Heart right ventricle (tissue), 16 donors: ENCODE measurements at regions of chr10 and their contacts with region 1.

Region 1: GRCh38 chr10:15719899-15720634 is at the start of gene ITGA8:
- DNase-seq: peak; percentile 37 to 38
- ATAC-seq: peak; percentile 55 to 77 (median 68)
- H3K4me3 ChIP-seq: peak within 1 kb of the TSS; percentile 31 to 61 (median 53)
- H3K27ac ChIP-seq: peak within 1 kb of the TSS in 4 of 10 donors; percentile 18 to 53 (median 29)
- H3K4me1 ChIP-seq: peaks cover 0 to 20% (median 8%) of the 10 kb centered on the region in 9 donors
- H3K27me3 ChIP-seq: peaks cover 8 to 62% (median 44%) of the 10 kb centered on the region in 7 donors
- CTCF ChIP-seq: peak in 8 of 9 donors; percentile 3 to 58 (median 38)
- total RNA-seq, gene ITGA8: 0.62 to 4.2 (median 2.1) TPM

Region 2: DNA sequence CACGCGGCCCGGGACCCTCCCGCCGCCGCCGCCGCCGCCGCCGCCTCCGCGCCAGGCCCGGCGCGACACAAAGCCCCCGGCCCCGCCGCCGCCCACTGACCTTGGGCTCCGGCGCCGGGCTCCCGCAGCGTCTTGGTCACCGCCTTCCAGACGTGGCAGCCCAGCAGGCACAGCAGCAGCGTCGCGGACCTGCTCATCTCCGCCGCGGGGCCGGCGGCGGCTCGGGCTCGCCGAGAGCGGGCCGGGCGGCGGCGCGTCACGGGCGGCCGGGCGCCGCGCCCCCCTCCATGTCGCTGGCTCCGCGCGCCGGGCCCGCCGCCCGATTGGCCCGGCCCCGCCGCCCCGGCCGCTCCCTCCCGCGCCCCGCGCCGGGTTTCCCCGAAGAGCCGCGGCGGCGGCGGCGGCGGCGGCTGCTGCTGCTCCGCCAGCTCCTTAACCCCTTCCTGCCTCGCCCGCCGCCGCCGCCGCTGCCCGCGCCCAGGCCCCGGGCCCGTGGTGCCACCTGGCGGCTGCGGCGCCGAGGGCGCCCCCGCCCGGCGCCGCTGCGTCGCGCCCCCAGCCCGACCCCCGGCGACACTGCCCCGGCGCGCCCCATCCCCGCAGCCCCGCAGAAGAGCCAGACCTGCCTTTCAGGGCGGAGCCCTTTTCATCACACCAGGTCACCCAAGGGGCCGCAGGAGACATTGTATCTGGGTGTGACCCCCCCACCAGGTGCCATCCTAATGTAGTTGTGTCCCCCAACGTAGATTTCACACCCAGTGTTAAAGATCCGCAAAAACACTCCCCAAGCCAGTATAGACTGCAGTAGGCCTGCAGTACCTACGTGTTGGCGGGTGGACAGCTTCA is 349.0 kb before region 1 on chr10 and contains the start of gene FAM171A1:
- intact Hi-C with region 1: no loop called
- DNase-seq: peak; percentile 42 to 68
- ATAC-seq: peak; percentile 35 to 86 (median 71)
- H3K4me3 ChIP-seq: peak within 1 kb of the TSS; percentile 60 to 82 (median 72)
- H3K27ac ChIP-seq: peak within 1 kb of the TSS in 8 of 10 donors; percentile 59 to 81 (median 76)
- H3K4me1 ChIP-seq: peaks cover 0 to 42% (median 15%) of the 10 kb centered on the region in 9 donors
- H3K27me3 ChIP-seq: peaks cover 0 to 69% (median 0%) of the 10 kb centered on the region in 7 donors
- CTCF ChIP-seq: peak in 6 of 9 donors; percentile 3 to 48 (median 14)
- total RNA-seq, gene FAM171A1: 3.5 to 10.5 (median 6.8) TPM

Region 3: GRCh38 chr10:15427843-15428414 is 292.1 kb before region 1 on chr10:
- intact Hi-C with region 1: loop called in 8 of 10 experiments (anchors 2 to 5 kb)
- DNase-seq: no peak
- ATAC-seq: peak in 1 of 8 donors; percentile 39
- H3K4me3 ChIP-seq: no peak overlapping the region
- H3K27ac ChIP-seq: no peak overlapping the region
- H3K4me1 ChIP-seq: no peaks in the 10 kb centered on the region
- H3K27me3 ChIP-seq: peaks cover 0 to 5% (median 0%) of the 10 kb centered on the region in 7 donors
- CTCF ChIP-seq: peak in 8 of 9 donors; percentile 39 to 72 (median 58)

Region 4: DNA sequence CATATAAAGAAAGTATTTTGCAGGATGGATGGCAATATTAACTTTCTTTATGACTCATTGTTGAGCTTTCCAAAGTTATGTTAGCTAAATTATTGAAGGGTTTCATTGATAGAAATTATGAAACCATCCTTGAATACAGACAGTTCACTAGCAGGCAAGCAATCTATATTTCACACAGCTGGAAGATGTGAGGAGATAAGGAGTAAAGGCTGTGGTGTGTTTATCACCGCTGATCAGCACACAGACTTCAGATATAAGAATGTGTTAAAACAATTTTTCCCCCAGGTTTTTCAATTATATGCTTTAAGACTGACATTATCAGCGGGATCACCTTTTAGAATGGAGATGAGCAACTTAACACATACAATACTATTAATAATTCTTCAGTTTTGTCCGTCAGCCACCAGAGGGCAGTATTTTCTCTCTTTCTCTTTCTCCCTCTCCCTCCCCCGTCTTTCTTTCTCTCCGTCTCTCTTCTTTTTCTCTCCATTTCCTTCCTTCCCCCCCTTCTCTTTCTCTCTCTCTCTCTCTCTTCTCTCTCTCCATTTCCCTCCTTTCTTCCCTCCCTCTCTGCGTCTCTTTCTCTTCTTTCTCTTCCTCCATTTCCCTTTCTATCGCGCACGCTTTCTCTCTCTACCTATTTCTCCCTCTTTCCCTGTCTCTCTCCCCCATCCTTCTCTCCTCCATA is 286.1 kb before region 1 on chr10:
- intact Hi-C with region 1: loop called (anchors 2 to 5 kb)
- DNase-seq: peak in 1 of 2 donors; percentile 57
- ATAC-seq: peak in 7 of 8 donors; percentile 38 to 87 (median 70)
- H3K4me3 ChIP-seq: peak overlapping the region in 7 of 10 donors; percentile 24 to 49 (median 41)
- H3K27ac ChIP-seq: no peak overlapping the region
- H3K4me1 ChIP-seq: peaks cover 0 to 7% (median 2%) of the 10 kb centered on the region in 9 donors
- H3K27me3 ChIP-seq: peaks cover 0 to 5% (median 0%) of the 10 kb centered on the region in 7 donors
- CTCF ChIP-seq: peak; percentile 69 to 86 (median 79)

Region 5: GRCh38 chr10:15439341-15439842 is 280.7 kb before region 1 on chr10:
- intact Hi-C with region 1: loop called in 8 of 10 experiments (anchors 2 to 5 kb)
- DNase-seq: peak; percentile 52 to 81
- ATAC-seq: peak; percentile 80 to 96 (median 93)
- H3K4me3 ChIP-seq: peak overlapping the region in 9 of 10 donors; percentile 1 to 49 (median 35)
- H3K27ac ChIP-seq: peak overlapping the region; percentile 47 to 83 (median 62)
- H3K4me1 ChIP-seq: peaks cover 0 to 20% (median 13%) of the 10 kb centered on the region in 9 donors
- H3K27me3 ChIP-seq: no peaks in the 10 kb centered on the region
- CTCF ChIP-seq: peak in 6 of 9 donors; percentile 19 to 53 (median 43)

Region 6: GRCh38 chr10:15642095-15642494 is 78.0 kb before region 1 on chr10:
- intact Hi-C with region 1: no loop called
- DNase-seq: no peak
- ATAC-seq: peak in 4 of 8 donors; percentile 48 to 79 (median 62)
- H3K4me3 ChIP-seq: no peak overlapping the region
- H3K27ac ChIP-seq: no peak overlapping the region
- H3K4me1 ChIP-seq: no peaks in the 10 kb centered on the region
- H3K27me3 ChIP-seq: no peaks in the 10 kb centered on the region
- CTCF ChIP-seq: no peak

Region 7: GRCh38 chr10:15658069-15658702 is 61.9 kb before region 1 on chr10:
- intact Hi-C with region 1: loop called in 1 of 10 experiments (anchors 10 kb)
- DNase-seq: no peak
- ATAC-seq: no peak
- H3K4me3 ChIP-seq: no peak overlapping the region
- H3K27ac ChIP-seq: no peak overlapping the region
- H3K4me1 ChIP-seq: no peaks in the 10 kb centered on the region
- H3K27me3 ChIP-seq: no peaks in the 10 kb centered on the region
- CTCF ChIP-seq: no peak

Region 8: DNA sequence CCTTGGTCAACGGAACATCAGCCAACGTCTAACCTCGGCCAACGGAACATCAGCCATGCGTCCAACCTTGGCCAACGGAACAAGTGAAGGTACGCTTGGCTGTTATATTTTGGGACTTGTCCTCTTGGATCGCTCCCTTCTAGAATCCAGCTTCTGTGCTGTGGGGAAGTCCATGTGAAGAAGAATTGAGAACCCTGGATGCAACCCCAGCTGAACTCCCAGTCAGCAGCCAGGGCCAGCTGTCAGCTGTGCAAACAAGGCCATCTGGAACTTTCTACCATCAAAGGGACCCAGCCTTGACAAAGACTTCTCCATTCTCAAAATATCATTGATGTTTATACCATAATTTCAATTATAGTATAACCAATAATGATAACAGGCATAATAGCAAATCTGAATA is 42.9 kb after region 1 on chr10:
- intact Hi-C with region 1: no loop called
- DNase-seq: peak; percentile 11 to 38
- ATAC-seq: peak in 5 of 8 donors; percentile 60 to 76 (median 67)
- H3K4me3 ChIP-seq: no peak overlapping the region
- H3K27ac ChIP-seq: no peak overlapping the region
- H3K4me1 ChIP-seq: no peaks in the 10 kb centered on the region
- H3K27me3 ChIP-seq: no peaks in the 10 kb centered on the region
- CTCF ChIP-seq: no peak

Region 9: DNA sequence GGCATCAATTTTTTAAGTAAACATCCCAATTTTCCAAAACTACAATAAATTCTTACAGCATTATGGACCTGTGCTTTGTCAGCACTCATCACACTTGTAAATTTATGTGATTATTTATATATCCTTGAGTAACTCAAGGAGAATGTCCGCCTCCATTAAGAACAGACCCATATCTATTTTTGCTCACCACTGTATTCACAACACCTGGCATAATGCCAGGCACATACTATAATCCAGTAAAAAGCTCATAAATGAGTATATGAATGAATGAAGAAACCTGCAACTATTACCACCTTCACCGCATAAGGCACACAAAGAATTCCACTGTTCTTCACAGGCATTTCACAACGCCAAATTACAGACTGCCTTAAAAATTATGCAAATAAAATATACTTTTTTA is 93.3 kb after region 1 on chr10:
- intact Hi-C with region 1: no loop called
- DNase-seq: no peak
- ATAC-seq: peak in 2 of 8 donors; percentile 24 to 69
- H3K4me3 ChIP-seq: no peak overlapping the region
- H3K27ac ChIP-seq: no peak overlapping the region
- H3K4me1 ChIP-seq: peaks cover 0 to 27% (median 9%) of the 10 kb centered on the region in 9 donors
- H3K27me3 ChIP-seq: no peaks in the 10 kb centered on the region
- CTCF ChIP-seq: no peak